Posterior cingulate gyrus (tissue), 11 donors: ENCODE measurements at regions of chr12 and their contacts with region 1.

Region 1: GRCh38 chr12:74317078-74317601 is 220.5 kb upstream of the ATXN7L3B start:
- DNase-seq: peak in 6 of 10 donors; percentile 33 to 87 (median 62)

Region 2: DNA sequence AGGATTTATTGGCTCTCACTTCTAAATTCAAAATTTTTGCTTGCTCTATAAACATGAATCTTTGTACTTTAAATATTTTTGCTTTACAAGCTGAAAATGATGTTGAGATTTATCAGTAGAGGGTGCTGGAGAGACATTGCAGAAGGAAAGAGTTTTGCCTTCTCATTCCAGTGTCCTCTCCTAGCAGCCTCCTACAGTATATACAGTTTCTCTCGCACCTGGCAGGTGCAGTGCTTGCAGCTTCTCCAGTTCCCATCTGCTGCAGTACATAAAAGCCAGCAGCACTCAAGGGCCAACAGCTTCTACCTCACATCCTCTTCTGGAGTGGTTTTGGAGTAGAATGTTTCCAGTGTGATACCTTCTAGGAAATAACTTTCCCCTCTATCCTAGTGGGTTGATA is 381.3 kb before region 1 on chr12:
- intact Hi-C with region 1: loop called (anchors 10 kb)
- DNase-seq: no peak

Region 3: DNA sequence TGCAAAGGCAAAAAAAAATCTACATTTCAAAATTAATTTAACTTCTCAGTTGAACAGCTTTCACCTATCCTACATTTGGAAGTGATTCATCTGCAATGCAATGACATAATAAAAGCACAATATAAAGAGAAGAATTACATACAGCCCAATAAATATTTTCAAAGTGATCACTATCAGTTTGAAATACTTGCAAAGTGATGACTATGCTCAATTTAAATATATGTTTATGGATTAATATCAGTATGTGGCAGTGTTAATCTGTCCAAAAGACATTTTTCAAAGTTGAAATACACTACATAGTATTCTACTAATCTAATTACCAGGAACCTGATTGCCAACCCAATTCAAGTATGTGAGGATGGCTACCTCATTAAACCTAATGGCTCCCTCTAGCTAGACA is 240.2 kb before region 1 on chr12:
- intact Hi-C with region 1: no loop called
- DNase-seq: no peak

Region 4: GRCh38 chr12:74595696-74596095 is 278.6 kb after region 1 on chr12:
- intact Hi-C with region 1: no loop called
- DNase-seq: no peak